Gastrocnemius medialis (tissue), 4 donors: ENCODE measurements at regions of chr1 and their contacts with region 1.

Region 1: DNA sequence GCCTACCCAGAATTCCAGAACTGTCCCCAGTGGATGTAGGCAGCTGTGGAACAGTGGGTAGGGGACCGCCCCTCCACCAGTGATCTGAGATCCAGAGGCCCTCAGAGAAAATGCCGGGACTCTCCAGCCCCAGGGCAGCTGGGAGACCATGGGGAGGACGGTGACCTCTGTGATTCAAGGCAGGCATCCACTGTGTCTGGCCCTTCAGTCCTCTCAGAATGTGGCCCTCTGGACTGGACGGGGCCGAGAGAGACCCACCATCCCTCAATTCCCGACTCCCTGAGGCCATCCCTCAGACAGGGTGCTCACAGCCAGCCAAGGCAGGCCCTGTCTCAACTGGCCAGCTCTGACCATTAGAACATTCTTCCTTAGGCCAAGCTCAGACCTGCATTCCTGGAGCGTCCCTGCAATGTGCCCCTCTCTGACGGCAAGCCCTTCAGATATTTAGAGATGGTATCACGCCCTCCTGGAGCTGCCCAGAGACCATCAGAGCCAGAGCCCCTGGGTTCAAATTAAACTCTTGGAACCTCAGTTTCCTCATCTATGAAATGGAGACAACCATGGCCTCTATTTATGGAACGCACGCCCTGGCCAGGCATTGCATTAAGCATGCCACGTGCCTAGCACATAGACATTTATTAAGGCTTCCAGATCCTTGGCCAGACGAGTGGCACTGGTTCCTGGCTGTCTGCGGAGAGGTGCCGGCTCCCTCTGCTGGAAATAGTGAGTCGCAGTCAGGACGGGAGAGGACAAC is 9.6 kb upstream of the EPS8L3 start:
- DNase-seq: peak; percentile 82 to 87
- ATAC-seq: peak; percentile 88 to 93
- H3K4me3 ChIP-seq: no peak overlapping the region
- H3K27ac ChIP-seq: peak overlapping the region in 1 of 4 donors; percentile 8
- H3K4me1 ChIP-seq: peaks cover 0 to 3% of the 10 kb centered on the region in 2 donors
- H3K27me3 ChIP-seq: no peaks in the 10 kb centered on the region
- CTCF ChIP-seq: peak; percentile 78 to 90 (median 85)
- POLR2A ChIP-seq: no peak

Region 2: GRCh38 chr1:109636201-109636952 is 136.9 kb before region 1 on chr1:
- in situ Hi-C with region 1: loop called (anchors 5 kb)
- intact Hi-C with region 1: loop called (anchors 1 kb)
- DNase-seq: no peak
- ATAC-seq: no peak
- H3K4me3 ChIP-seq: no peak overlapping the region
- H3K27ac ChIP-seq: no peak overlapping the region
- H3K4me1 ChIP-seq: peaks cover 4 to 10% of the 10 kb centered on the region in 2 donors
- H3K27me3 ChIP-seq: no peaks in the 10 kb centered on the region
- CTCF ChIP-seq: no peak
- POLR2A ChIP-seq: no peak

Region 3: DNA sequence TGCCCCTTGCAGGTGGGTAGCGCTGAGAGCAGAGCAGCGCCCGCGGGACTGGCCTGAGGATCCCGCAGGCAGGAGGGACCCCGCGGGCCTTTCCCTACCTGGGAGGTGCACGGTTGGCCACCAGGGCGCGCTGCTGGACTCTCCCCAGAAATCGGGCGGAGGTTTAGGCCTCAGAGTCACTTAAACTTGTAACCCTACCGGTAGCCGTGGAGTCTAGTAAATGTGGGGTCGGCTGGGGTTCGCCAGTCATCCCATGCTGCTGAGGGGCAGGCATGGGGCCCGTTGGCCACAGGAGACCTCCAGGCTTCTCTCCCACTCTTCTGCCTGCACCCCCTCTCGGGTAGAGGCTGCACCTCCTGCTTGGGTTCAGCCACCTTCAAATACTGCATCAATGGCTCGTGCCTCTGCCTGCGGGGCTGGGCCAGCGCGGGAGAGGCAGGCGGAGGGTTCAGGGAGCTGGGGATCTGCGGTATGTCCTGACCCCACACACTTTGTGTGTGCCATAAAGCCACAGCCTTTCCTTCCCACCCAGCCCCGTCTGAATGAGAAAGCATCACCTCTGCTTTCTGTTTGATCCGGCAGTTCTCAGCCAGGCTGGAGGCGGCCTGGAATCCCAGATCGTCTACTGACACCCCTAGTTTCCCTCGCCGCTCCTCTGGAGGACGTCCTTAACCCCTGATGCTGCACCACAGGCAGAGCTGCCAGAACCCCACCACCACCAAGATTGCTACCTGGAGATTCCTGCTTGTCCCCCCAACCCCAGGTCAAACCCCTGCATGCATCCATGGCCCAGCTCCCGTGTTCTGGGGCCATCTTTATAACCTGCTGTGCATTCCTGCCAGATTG is 129.7 kb before region 1 on chr1:
- in situ Hi-C with region 1: loop called (anchors 5 kb)
- intact Hi-C with region 1: loop called (anchors 1 kb)
- DNase-seq: peak; percentile 60 to 69
- ATAC-seq: peak; percentile 92 to 95
- H3K4me3 ChIP-seq: peak overlapping the region in 1 of 4 donors; percentile 14
- H3K27ac ChIP-seq: no peak overlapping the region
- H3K4me1 ChIP-seq: peaks cover 0 to 6% of the 10 kb centered on the region in 2 donors
- H3K27me3 ChIP-seq: no peaks in the 10 kb centered on the region
- CTCF ChIP-seq: peak; percentile 73 to 92 (median 85)
- POLR2A ChIP-seq: no peak

Region 4: GRCh38 chr1:109718491-109718890 is 54.8 kb before region 1 on chr1:
- in situ Hi-C with region 1: no loop called
- intact Hi-C with region 1: loop called (anchors 5 kb)
- DNase-seq: no peak
- ATAC-seq: peak; percentile 42 to 69
- H3K4me3 ChIP-seq: no peak overlapping the region
- H3K27ac ChIP-seq: no peak overlapping the region
- H3K4me1 ChIP-seq: no peaks in the 10 kb centered on the region
- H3K27me3 ChIP-seq: no peaks in the 10 kb centered on the region
- CTCF ChIP-seq: no peak
- POLR2A ChIP-seq: no peak

Region 5: GRCh38 chr1:109979489-109980091 is 206.3 kb after region 1 on chr1:
- in situ Hi-C with region 1: loop called in 3 of 4 experiments (anchors 5 kb)
- intact Hi-C with region 1: loop called (anchors 1 kb)
- DNase-seq: peak in 1 of 2 donors; percentile 43
- ATAC-seq: no peak
- H3K4me3 ChIP-seq: no peak overlapping the region
- H3K27ac ChIP-seq: peak overlapping the region; percentile 21 to 49 (median 36)
- H3K4me1 ChIP-seq: peaks cover 23 to 24% of the 10 kb centered on the region in 2 donors
- H3K27me3 ChIP-seq: no peaks in the 10 kb centered on the region
- CTCF ChIP-seq: no peak
- POLR2A ChIP-seq: no peak